Natural killer cell (primary cell): ENCODE measurements at regions of chr2 and their contacts with region 1.

Region 1: DNA sequence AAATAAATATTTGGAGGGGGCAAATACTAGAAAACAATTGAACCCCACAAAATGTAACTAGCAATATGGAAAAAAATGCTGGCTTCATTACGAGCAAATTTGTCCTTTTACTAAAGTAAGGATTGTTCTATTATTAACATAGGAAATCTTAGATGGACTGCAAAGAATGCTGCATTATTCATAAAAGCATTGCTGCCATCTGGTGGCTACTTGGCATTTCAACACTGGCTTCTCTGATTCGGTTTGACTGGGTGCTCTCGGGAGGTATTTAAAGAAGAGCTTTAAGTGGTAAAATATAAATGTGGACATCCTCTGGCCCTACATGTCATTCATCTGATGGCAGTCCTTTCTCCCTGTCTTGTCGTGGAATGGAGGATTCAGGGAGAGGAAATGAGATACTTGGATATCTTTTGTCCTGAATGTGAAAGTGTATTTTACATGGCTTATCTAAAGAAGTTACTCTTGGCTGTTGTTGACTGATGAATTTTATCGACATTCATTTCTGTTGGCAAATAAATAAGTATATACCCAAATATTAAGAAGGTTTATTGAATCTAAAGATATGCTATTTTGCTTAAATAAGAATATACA is 130.2 kb downstream of the ARHGAP15 start:
- DNase-seq: peak; percentile 51 to 91
- ATAC-seq: peak; percentile 53 to 56 (median 54)
- H3K4me3 ChIP-seq: no peak overlapping the region
- H3K4me3 Mint-ChIP-seq: peak overlapping the region; percentile 73
- H3K27ac ChIP-seq: peak overlapping the region; percentile 66
- H3K27ac Mint-ChIP-seq: peak overlapping the region; percentile 86 to 90
- H3K4me1 ChIP-seq: peaks cover 31% of the 10 kb centered on the region
- H3K4me1 Mint-ChIP-seq: peaks cover 56 to 64% of the 10 kb centered on the region in 2 donors
- H3K27me3 ChIP-seq: no peaks in the 10 kb centered on the region
- H3K27me3 Mint-ChIP-seq: no peaks in the 10 kb centered on the region
- CTCF ChIP-seq: peak; percentile 93

Region 2: DNA sequence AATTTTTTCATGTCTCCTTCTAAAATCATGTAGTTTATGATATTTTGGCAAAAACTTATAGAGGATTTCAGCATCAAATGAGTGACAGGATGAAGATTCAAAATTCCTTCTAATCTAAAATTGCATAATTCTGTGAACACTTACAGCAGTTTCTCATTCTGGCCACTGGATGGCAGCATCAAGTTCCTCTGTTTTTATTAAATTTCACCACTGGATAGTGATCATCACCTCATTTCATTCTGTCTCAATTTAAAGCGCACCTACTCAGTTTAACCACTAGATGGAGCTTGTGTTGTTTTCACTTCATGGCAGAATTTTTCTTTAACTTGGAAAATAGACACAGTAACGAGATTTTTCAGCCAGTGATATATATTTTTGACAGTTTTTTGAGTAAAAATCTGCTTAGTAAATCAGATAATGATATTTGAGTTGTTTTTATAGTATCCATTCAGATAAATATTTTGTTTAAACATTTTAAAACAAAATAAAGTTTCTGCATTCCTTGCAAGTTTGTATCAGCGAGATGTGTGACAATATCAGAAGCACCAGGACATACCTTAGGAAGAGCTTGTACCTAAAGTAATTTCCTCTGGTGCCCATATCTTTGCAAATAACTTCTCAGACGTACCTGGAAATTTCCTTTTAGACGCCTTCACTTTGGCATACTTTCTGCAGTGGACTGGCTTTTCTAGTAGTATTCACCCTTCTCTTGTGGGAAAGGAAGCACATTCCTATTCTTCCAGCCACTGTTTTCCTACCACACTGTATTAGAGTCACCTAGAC is 225.0 kb before region 1 on chr2:
- intact Hi-C with region 1: loop called (anchors 1 kb)
- DNase-seq: peak; percentile 26 to 89
- ATAC-seq: peak; percentile 99 to 100 (median 100)
- H3K4me3 ChIP-seq: no peak overlapping the region
- H3K4me3 Mint-ChIP-seq: no peak overlapping the region
- H3K27ac ChIP-seq: no peak overlapping the region
- H3K27ac Mint-ChIP-seq: no peak overlapping the region
- H3K4me1 ChIP-seq: no peaks in the 10 kb centered on the region
- H3K4me1 Mint-ChIP-seq: no peaks in the 10 kb centered on the region
- H3K27me3 ChIP-seq: no peaks in the 10 kb centered on the region
- H3K27me3 Mint-ChIP-seq: no peaks in the 10 kb centered on the region
- CTCF ChIP-seq: peak; percentile 100

Region 3: DNA sequence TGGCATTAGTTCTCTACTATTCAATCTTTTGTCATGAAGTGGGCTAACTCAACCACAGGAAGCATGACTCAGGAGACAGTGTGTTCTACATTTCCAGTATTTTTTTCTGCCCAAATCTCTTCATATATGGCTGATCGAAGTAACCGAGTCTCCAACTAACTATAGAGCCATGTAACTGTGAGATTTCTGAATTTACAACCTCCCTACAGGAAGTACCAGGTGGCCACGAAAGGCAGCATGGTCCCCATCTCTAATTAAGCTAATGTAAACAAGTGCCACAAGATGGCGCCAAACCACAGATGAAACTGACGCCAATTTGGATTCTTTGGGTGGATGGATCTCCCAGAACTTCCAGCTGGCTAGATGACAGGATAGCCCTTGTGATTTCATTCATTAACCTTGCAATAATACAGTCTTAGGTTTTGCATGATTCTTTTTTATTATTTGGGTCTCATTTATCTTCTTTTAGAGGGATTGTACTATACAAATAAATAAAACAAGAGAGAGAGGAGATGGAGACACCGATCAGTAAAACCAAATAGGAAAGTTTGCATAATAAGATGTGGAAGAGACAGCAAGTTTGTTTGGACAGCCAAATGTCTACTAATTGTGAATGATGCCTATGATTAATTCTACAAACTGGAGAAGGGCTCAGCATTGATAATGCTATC is 148.6 kb before region 1 on chr2:
- intact Hi-C with region 1: loop called (anchors 1 kb)
- DNase-seq: peak; percentile 36 to 91
- ATAC-seq: peak; percentile 85 to 87 (median 86)
- H3K4me3 ChIP-seq: no peak overlapping the region
- H3K4me3 Mint-ChIP-seq: no peak overlapping the region
- H3K27ac ChIP-seq: no peak overlapping the region
- H3K27ac Mint-ChIP-seq: peak overlapping the region; percentile 12 to 84
- H3K4me1 ChIP-seq: no peaks in the 10 kb centered on the region
- H3K4me1 Mint-ChIP-seq: peaks cover 6 to 7% of the 10 kb centered on the region in 2 donors
- H3K27me3 ChIP-seq: no peaks in the 10 kb centered on the region
- H3K27me3 Mint-ChIP-seq: peaks cover 2 to 7% of the 10 kb centered on the region in 2 donors
- CTCF ChIP-seq: peak; percentile 90

Region 4: GRCh38 chr2:143128681-143129580 is 130.5 kb before region 1 on chr2 and contains the start of gene ARHGAP15:
- intact Hi-C with region 1: loop called (anchors 5 kb)
- DNase-seq: peak; percentile 44 to 91
- ATAC-seq: peak; percentile 85 to 93 (median 92)
- H3K4me3 ChIP-seq: peak within 1 kb of the TSS; percentile 77
- H3K4me3 Mint-ChIP-seq: peak within 1 kb of the TSS; percentile 89
- H3K27ac ChIP-seq: peak within 1 kb of the TSS; percentile 95
- H3K27ac Mint-ChIP-seq: peak within 1 kb of the TSS; percentile 96
- H3K4me1 ChIP-seq: peaks cover 17% of the 10 kb centered on the region
- H3K4me1 Mint-ChIP-seq: peaks cover 40 to 55% of the 10 kb centered on the region in 2 donors
- H3K27me3 ChIP-seq: no peaks in the 10 kb centered on the region
- H3K27me3 Mint-ChIP-seq: no peaks in the 10 kb centered on the region
- CTCF ChIP-seq: no peak
- total RNA-seq, gene ARHGAP15: 148 to 168 (median 165) TPM

Region 5: GRCh38 chr2:143162123-143162837 is 97.2 kb before region 1 on chr2:
- intact Hi-C with region 1: loop called (anchors 2 kb)
- DNase-seq: peak in 1 of 2 donors; percentile 85
- ATAC-seq: peak; percentile 84 to 95 (median 92)
- H3K4me3 ChIP-seq: no peak overlapping the region
- H3K4me3 Mint-ChIP-seq: no peak overlapping the region
- H3K27ac ChIP-seq: no peak overlapping the region
- H3K27ac Mint-ChIP-seq: peak overlapping the region; percentile 37 to 78
- H3K4me1 ChIP-seq: peaks cover 4% of the 10 kb centered on the region
- H3K4me1 Mint-ChIP-seq: peaks cover 80 to 82% of the 10 kb centered on the region in 2 donors
- H3K27me3 ChIP-seq: no peaks in the 10 kb centered on the region
- H3K27me3 Mint-ChIP-seq: no peaks in the 10 kb centered on the region
- CTCF ChIP-seq: peak; percentile 40

Region 6: GRCh38 chr2:143205106-143205764 is 54.2 kb before region 1 on chr2:
- intact Hi-C with region 1: loop called (anchors 1 kb)
- DNase-seq: peak in 1 of 2 donors; percentile 69
- ATAC-seq: peak; percentile 57 to 73 (median 67)
- H3K4me3 ChIP-seq: no peak overlapping the region
- H3K4me3 Mint-ChIP-seq: no peak overlapping the region
- H3K27ac ChIP-seq: no peak overlapping the region
- H3K27ac Mint-ChIP-seq: peak overlapping the region; percentile 61 to 67
- H3K4me1 ChIP-seq: peaks cover 6% of the 10 kb centered on the region
- H3K4me1 Mint-ChIP-seq: peaks cover 38 to 50% of the 10 kb centered on the region in 2 donors
- H3K27me3 ChIP-seq: no peaks in the 10 kb centered on the region
- H3K27me3 Mint-ChIP-seq: no peaks in the 10 kb centered on the region
- CTCF ChIP-seq: peak; percentile 38

Region 7: DNA sequence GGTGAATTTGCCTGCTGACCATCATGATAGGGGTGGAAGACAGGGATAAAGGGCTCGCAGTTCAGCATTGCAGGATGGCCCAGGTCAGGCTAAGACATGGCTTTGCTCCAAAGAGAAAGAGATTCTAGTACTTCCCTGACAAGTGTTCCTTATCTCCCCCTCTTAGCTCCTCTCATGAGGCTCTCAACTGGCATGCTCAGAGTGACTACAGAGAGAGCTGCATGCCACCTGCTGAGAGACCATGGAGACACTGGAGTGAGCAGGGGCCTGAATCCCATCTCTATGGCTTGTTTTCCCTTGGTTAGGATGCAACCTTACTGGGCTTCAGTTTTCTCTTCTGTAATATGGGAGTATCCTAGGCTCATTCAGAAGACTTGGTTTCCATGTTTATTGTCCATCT is 35.9 kb before region 1 on chr2:
- intact Hi-C with region 1: loop called (anchors 5 kb)
- DNase-seq: no peak
- ATAC-seq: no peak
- H3K4me3 ChIP-seq: no peak overlapping the region
- H3K4me3 Mint-ChIP-seq: no peak overlapping the region
- H3K27ac ChIP-seq: no peak overlapping the region
- H3K27ac Mint-ChIP-seq: peak overlapping the region in 1 of 2 donors; percentile 72
- H3K4me1 ChIP-seq: no peaks in the 10 kb centered on the region
- H3K4me1 Mint-ChIP-seq: peaks cover 32 to 34% of the 10 kb centered on the region in 2 donors
- H3K27me3 ChIP-seq: no peaks in the 10 kb centered on the region
- H3K27me3 Mint-ChIP-seq: no peaks in the 10 kb centered on the region
- CTCF ChIP-seq: no peak

Region 8: DNA sequence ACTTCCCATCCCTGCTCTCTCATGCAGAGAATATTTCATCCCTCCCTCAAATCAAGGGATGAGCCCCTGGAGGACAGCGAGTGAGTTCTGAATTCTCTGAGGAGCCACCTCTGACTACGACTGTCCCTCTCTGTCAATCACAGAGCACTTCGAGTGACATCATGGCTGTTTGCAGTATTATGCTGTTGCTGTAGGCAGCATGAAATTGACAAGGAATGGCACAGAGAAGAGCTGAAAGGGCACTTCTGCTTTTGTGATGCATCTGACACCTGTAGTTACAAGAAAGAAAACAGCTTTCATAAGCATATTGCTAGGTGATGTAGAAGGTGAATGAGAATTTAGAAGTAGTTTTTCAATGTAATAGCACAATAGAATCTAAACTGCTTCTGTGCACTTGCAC is 36.6 kb after region 1 on chr2:
- intact Hi-C with region 1: no loop called
- DNase-seq: no peak
- ATAC-seq: no peak
- H3K4me3 ChIP-seq: no peak overlapping the region
- H3K4me3 Mint-ChIP-seq: no peak overlapping the region
- H3K27ac ChIP-seq: no peak overlapping the region
- H3K27ac Mint-ChIP-seq: no peak overlapping the region
- H3K4me1 ChIP-seq: no peaks in the 10 kb centered on the region
- H3K4me1 Mint-ChIP-seq: peaks cover 42 to 43% of the 10 kb centered on the region in 2 donors
- H3K27me3 ChIP-seq: no peaks in the 10 kb centered on the region
- H3K27me3 Mint-ChIP-seq: no peaks in the 10 kb centered on the region
- CTCF ChIP-seq: no peak